CD8-positive, alpha-beta memory T cell (primary cell): ENCODE measurements at regions of chr6 and their contacts with region 1.

Region 1: DNA sequence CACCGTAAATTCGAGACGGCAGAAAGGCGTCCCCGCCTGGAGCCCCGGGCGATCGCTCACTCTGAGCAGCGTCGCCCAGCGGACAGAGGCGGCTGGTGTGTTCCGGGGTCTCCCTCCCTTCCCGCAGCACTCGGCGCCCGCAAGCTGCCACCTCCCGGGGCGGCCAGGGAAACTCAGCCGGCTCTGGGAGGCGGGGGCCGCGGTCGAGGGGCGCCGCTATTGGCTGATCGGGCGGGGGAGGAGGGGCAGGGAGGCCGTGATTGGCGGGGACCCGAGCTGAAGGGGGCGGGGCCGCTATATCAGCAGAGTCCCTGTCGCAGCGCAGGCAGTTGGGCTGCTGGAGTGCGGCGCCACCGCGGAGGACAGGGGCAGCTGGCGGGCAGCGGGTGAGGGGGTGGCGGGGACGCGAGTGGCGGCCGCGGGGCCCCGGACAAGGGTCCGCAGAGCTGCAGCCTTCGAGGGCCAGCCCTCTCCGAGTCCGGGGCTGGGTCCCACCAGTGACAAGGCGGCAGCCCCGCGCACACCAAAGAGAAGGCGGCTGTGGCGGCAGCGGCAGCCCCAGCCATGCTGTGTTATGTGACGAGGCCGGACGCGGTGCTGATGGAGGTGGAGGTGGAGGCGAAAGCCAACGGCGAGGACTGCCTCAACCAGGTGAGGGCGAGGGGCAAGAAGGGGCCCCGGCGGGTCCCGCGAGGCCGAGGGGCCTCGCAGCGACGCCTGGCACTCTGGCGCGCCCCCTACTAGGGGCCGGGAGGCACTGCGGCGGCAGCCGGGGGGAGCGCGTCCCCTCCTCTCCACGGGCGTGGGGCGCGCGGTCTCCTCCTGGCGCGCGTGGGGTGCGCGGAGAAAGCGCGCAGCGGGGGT is at the start of gene MYLIP:
- DNase-seq: peak; percentile 96 to 97 (median 97)
- H3K4me3 ChIP-seq: peak within 1 kb of the TSS; percentile 93
- H3K4me3 Mint-ChIP-seq: peak within 1 kb of the TSS; percentile 94 to 99 (median 96)
- H3K27ac ChIP-seq: peak within 1 kb of the TSS; percentile 82
- H3K27ac Mint-ChIP-seq: peak within 1 kb of the TSS; percentile 93 to 100 (median 97)
- H3K4me1 ChIP-seq: peaks cover 30% of the 10 kb centered on the region
- H3K4me1 Mint-ChIP-seq: peaks cover 34 to 50% (median 38%) of the 10 kb centered on the region in 3 donors
- H3K27me3 ChIP-seq: no peaks in the 10 kb centered on the region
- H3K27me3 Mint-ChIP-seq: peaks cover 0 to 3% of the 10 kb centered on the region in 2 donors
- total RNA-seq, gene MYLIP: 7.7 to 9.0 TPM

Region 2: GRCh38 chr6:16183187-16183664 is 54.2 kb after region 1 on chr6:
- CTCF ChIA-PET with region 1: interaction called, 16 read pairs
- POLR2A ChIA-PET with region 1: interaction called, 17 read pairs
- DNase-seq: peak in 2 of 5 donors; percentile 32 to 41
- H3K4me3 ChIP-seq: no peak overlapping the region
- H3K4me3 Mint-ChIP-seq: no peak overlapping the region
- H3K27ac ChIP-seq: no peak overlapping the region
- H3K27ac Mint-ChIP-seq: peak overlapping the region in 5 of 8 donors; percentile 6 to 66 (median 21)
- H3K4me1 ChIP-seq: peaks cover 21% of the 10 kb centered on the region
- H3K4me1 Mint-ChIP-seq: peaks cover 30 to 43% (median 32%) of the 10 kb centered on the region in 3 donors
- H3K27me3 ChIP-seq: no peaks in the 10 kb centered on the region
- H3K27me3 Mint-ChIP-seq: peaks cover 2 to 5% of the 10 kb centered on the region in 2 donors